ENCODE measurements at regions of chr11 and their contacts with region 1.

Region 1: GRCh38 chr11:86802601-86803051 is 2.3 kb downstream of the PRSS23 start:
- DNase-seq: no peak
- H3K4me3 ChIP-seq: peak overlapping the region; percentile 76
- H3K27ac ChIP-seq: no peak overlapping the region
- H3K4me1 ChIP-seq: peaks cover 7% of the 10 kb centered on the region
- H3K27me3 ChIP-seq: no peaks in the 10 kb centered on the region
- CTCF ChIP-seq: peak; percentile 30 to 48 (median 45)
- EP300 ChIP-seq: no peak
- POLR2A ChIP-seq: no peak

Region 2: DNA sequence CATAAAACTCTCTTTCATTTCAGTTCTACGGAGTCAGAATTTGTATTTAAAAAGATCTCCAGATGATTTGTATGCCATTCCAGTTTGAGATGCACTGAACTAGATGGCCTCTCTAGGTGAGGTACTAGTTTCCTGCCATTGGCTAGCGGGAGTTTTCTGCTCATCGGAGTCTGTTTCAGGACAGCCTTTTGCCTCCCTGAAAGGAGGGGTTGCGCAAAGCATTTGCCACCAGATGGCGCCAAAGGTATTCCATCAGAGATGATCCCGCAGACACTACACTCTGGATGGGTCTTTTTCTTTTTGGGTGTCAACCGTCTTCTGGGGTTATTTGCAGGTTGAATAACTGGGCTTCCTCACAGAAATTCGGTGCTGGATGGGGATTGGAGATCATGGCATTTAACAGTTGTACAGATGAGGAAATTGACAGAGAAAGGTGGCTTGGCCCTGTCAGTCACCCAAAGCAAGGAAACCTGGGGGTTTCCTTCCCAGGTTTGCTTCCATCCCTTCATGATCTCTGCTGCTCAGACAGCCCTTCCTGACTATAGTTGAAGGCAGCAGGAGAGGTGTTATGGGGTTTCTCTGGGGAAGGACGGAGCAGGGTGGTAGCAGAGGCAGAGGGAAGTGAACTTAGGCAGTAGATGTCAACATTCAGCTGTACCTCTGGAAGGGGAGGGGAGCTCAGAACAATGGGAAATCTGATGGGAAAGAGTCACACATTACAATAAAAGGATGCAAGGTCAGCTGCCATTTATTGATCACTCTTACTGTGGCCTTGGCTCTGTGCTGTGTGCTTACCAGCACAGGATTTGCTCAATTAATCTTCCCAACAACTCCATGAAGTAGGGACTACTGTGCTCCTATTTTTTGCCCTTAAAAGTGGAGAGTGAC is 346.3 kb before region 1 on chr11:
- intact Hi-C with region 1: loop called in 1 of 4 experiments (anchors 5 kb)
- DNase-seq: peak; percentile 82 to 92 (median 88)
- H3K4me3 ChIP-seq: no peak overlapping the region
- H3K27ac ChIP-seq: no peak overlapping the region
- H3K4me1 ChIP-seq: peaks cover 13% of the 10 kb centered on the region
- H3K27me3 ChIP-seq: no peaks in the 10 kb centered on the region
- CTCF ChIP-seq: peak; percentile 83 to 91 (median 84)
- EP300 ChIP-seq: no peak
- POLR2A ChIP-seq: no peak

Region 3: DNA sequence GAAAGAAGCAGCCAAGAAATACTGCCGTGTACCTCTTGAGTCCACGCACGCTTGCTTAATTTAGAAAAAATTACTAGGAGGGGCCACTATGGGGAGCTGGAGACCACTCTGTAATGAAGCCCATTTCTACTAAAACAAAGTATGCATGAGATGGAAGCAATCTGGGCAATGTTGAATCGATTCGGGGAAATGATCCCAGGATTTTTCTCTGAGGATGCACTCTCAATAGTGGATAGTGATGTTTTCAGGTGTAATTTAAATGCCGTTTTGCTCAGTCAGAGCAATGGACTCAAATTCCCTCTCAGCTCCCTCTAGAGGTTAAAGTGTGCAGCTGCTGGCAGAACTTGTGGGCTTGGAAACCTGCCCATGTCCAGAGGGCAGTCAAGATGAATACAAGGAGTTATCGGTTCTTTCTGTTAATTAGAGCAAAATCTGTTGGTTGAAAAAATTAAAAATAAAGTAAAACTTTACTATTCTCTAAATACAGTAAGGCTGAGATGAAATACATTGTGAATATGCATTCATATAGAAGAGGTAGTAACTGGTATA is 194.3 kb before region 1 on chr11:
- intact Hi-C with region 1: loop called in 1 of 4 experiments (anchors 5 kb)
- DNase-seq: peak; percentile 75 to 85 (median 82)
- H3K4me3 ChIP-seq: no peak overlapping the region
- H3K27ac ChIP-seq: no peak overlapping the region
- H3K4me1 ChIP-seq: peaks cover 10% of the 10 kb centered on the region
- H3K27me3 ChIP-seq: no peaks in the 10 kb centered on the region
- CTCF ChIP-seq: peak; percentile 94 to 97 (median 94)
- EP300 ChIP-seq: no peak
- POLR2A ChIP-seq: no peak

Region 4: DNA sequence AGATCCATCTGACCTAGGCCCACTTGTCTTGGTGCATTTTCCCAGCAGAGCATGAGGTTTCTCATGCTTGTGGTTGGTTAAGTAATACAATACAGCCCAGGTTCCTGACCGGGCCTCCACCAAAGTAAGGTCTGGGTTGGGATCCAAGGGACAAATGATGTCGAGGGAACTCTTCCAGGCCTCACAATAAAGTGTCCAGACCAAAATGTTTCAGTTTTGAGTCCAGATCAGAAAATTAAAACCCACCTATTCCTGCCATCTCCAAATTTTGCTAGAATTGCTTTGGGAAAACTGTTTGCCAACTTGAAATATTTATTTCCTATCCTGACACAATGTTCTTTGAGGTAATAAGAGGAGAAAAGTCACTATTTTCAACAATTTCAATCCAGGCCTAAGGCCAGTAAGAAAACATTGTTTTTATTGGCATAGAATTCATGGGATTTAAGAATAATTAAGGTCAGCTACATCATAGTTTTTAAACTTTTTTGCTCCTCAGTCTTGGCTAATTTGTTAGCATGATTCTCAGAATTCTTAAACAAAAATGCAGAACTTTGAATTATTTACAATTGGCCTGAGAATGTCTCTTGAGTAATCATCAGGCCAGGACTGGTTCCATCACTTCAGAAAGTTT is 181.6 kb before region 1 on chr11:
- intact Hi-C with region 1: loop called in 1 of 4 experiments (anchors 10 kb)
- DNase-seq: no peak
- H3K4me3 ChIP-seq: no peak overlapping the region
- H3K27ac ChIP-seq: peak overlapping the region; percentile 45 to 77
- H3K4me1 ChIP-seq: peaks cover 13% of the 10 kb centered on the region
- H3K27me3 ChIP-seq: no peaks in the 10 kb centered on the region
- CTCF ChIP-seq: no peak
- EP300 ChIP-seq: no peak
- POLR2A ChIP-seq: no peak

Region 5: DNA sequence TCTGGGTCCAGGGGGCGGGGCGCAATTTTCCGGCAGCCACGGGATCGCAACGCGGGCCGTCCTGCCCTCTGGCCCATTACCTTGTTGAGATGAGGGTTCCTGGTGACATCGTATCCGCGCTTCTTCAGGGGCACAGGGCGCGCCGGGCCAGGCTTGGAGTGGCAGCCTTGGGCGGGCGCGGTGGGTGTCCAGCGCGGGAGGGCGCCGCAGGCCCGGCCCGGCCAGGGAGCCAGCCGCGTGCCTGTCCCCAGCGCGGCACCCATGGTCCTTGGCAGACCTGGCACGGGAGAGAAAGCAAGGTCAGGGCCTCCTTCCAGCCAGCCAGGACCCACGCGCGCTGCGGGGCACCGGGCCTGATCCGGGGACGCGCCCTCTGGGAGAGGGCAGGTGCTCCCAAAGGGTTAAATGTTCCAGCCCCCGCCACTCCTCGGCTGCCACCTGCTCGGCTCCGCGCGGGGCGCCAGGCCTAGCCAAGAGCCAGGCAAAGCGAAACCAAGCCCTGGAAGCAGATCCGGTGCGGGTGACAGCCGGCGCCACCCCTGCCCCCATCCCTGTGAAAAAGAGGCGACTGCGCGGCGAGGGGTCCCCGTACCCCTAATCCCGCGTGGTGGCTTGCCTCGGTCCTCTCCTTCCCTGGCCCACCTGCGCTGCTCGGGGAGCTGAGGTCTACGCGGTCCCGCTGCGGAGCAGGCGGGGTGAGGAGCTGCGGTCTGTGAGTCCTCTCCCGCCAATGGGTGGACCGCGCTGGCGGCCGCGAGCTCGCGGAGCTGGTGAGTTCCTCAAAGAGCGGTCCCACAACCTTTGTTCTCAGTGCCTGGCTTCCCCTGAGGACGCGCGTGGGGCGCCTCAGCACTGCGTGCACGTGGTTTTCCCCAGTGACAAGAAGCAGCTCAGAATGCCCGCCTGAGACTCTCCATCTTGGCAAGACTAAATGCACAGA is 130.7 kb before region 1 on chr11 and contains the start of gene ME3:
- intact Hi-C with region 1: loop called in 1 of 4 experiments (anchors 10 kb)
- DNase-seq: peak; percentile 70 to 91 (median 78)
- H3K4me3 ChIP-seq: peak within 1 kb of the TSS; percentile 93
- H3K27ac ChIP-seq: peak within 1 kb of the TSS; percentile 93 to 97
- H3K4me1 ChIP-seq: peaks cover 4% of the 10 kb centered on the region
- H3K27me3 ChIP-seq: no peaks in the 10 kb centered on the region
- CTCF ChIP-seq: no peak
- EP300 ChIP-seq: no peak
- POLR2A ChIP-seq: peak; percentile 47
- total RNA-seq, gene ME3: 35.9 to 48.6 (median 45.7) TPM

Region 6: GRCh38 chr11:86706321-86706720 is 96.3 kb before region 1 on chr11:
- intact Hi-C with region 1: no loop called
- DNase-seq: no peak
- H3K4me3 ChIP-seq: no peak overlapping the region
- H3K27ac ChIP-seq: no peak overlapping the region
- H3K4me1 ChIP-seq: peaks cover 12% of the 10 kb centered on the region
- H3K27me3 ChIP-seq: no peaks in the 10 kb centered on the region
- CTCF ChIP-seq: no peak
- EP300 ChIP-seq: no peak
- POLR2A ChIP-seq: no peak

Region 7: DNA sequence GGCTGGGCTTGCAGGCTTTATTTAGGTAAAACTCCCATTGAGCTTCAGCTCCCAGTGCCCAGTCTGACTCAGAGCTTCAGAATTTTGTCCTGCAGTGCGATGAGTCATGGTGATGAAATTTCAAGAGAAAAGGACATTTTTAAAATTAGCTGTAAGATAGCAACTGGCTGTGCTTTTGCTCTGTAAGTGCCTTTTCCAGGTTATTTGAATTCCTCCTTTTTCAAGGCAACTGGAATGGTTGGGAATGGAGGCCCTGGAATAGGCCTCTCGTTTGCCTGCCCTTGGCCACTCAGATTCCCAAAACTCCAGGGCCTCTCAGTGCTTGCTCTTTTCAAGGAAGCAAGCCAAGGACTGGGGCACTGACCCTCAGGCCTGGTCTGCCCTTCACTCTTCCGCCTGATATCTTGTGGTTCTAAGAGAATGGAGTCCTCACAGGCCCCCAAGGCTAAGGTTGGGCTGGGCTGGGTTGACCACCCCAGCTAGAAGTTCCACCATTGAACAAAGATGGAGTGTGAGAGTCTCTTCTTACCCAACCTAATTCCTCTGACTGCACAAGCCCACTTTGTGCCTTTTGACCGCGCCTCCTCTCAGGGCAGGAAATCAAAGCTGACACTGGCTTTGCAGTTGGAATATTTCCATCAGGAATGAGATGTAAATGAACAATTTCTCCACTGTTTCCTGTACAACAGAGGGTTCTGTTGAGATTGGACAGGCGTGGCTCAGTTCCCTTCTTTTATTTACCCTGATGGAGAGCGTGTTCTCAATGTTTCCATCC is 61.7 kb before region 1 on chr11:
- intact Hi-C with region 1: no loop called
- DNase-seq: peak; percentile 43 to 76 (median 56)
- H3K4me3 ChIP-seq: no peak overlapping the region
- H3K27ac ChIP-seq: peak overlapping the region; percentile 68 to 77
- H3K4me1 ChIP-seq: peaks cover 29% of the 10 kb centered on the region
- H3K27me3 ChIP-seq: no peaks in the 10 kb centered on the region
- CTCF ChIP-seq: no peak
- EP300 ChIP-seq: no peak
- POLR2A ChIP-seq: no peak